BJ (cell line): ENCODE measurements at regions of chr1 and their contacts with region 1.

Region 1: GRCh38 chr1:36516372-36517325 is 33.9 kb upstream of the CSF3R start:
- DNase-seq: no peak
- H3K4me3 ChIP-seq: no peak overlapping the region
- H3K27me3 ChIP-seq: no peaks in the 10 kb centered on the region; the same call in 1 of the 2 replicates
- CTCF ChIP-seq: peak; percentile 86

Region 2: GRCh38 chr1:36506276-36506920 is 10.3 kb before region 1 on chr1:
- CTCF ChIA-PET with region 1: interaction called, 36 read pairs
- POLR2A ChIA-PET with region 1: no interaction called
- DNase-seq: no peak
- H3K4me3 ChIP-seq: no peak overlapping the region
- H3K27me3 ChIP-seq: no peaks in the 10 kb centered on the region
- CTCF ChIP-seq: no peak

Region 3: DNA sequence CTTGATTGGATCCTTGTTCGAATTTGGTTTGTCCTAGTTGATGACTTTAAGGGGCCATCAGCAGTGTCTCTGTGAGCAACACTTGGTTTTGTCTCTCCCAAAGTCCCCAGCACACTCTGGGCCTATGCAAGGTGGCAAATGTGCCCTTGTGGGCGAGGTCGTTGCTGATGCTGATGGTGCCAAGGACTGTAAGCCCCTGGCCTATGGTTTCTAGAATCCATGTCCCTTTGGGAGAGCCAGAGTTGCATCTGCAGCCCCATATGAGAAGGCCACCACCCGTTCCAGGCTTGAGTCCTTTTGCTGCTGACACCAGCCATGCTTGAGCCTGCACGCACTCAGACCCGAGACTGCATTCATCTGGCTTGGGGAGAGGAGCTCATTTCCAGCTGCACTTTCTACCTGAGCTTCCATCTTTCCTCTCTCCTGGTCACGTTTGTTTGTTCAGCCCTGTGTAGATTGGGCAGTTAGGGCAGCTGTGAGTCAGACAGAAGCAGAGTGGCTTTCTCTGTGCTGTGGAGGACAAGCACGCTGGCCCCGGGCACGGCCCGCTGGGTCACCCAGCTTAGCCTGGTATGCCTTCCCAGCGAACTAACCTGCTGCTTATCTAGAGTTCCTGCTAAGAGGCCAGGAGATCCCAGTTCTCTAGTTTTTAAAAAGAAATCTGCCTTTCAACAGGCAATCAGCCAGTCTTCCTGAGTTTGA is 18.2 kb after region 1 on chr1:
- CTCF ChIA-PET with region 1: interaction called, 22 read pairs
- POLR2A ChIA-PET with region 1: no interaction called
- DNase-seq: no peak
- H3K4me3 ChIP-seq: no peak overlapping the region
- H3K27me3 ChIP-seq: peaks cover 2% of the 10 kb centered on the region; the same call in 1 of the 2 replicates
- CTCF ChIP-seq: no peak

Region 4: GRCh38 chr1:37434292-37434907 is 917.8 kb after region 1 on chr1:
- CTCF ChIA-PET with region 1: interaction called, 13 read pairs
- POLR2A ChIA-PET with region 1: no interaction called
- DNase-seq: no peak
- H3K4me3 ChIP-seq: no peak overlapping the region
- H3K27me3 ChIP-seq: peaks cover 9% of the 10 kb centered on the region
- CTCF ChIP-seq: peak; percentile 97